ENCODE measurements at regions of chr11 and their contacts with region 1.

Region 1: GRCh38 chr11:128039140-128040021 is 548.0 kb downstream of the ETS1 start:
- DNase-seq: peak; percentile 90
- H3K4me3 Mint-ChIP-seq: peak overlapping the region; percentile 61
- H3K27ac Mint-ChIP-seq: peak overlapping the region; percentile 89
- H3K4me1 Mint-ChIP-seq: peaks cover 52% of the 10 kb centered on the region
- H3K27me3 Mint-ChIP-seq: no peaks in the 10 kb centered on the region

Region 2: DNA sequence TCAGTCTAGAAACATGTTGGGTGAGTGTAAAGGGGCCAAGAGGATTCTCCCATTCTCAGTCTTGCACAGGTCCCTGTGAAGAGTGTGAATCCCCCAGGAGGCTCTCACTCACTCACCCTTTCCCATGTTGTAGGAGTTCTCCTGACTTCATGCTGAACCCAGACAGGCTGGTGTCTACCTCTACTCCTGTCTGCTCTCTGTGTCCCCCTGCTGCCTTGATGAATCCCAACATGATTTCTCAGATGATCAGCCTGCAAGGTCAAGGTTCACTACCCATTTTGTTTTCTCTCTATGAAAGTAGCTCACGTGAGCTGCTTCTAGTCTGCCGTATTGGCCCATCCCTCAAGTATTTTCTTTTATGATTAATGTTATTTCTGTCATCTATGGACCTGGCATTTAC is 47.4 kb after region 1 on chr11:
- CTCF ChIA-PET with region 1: interaction called, 5 read pairs
- POLR2A ChIA-PET with region 1: no interaction called
- intact Hi-C with region 1: loop called (anchors 2 kb)
- DNase-seq: no peak
- H3K4me3 Mint-ChIP-seq: no peak overlapping the region
- H3K27ac Mint-ChIP-seq: no peak overlapping the region
- H3K4me1 Mint-ChIP-seq: peaks cover 49% of the 10 kb centered on the region
- H3K27me3 Mint-ChIP-seq: no peaks in the 10 kb centered on the region

Region 3: GRCh38 chr11:128179039-128179438 is 139.7 kb after region 1 on chr11:
- CTCF ChIA-PET with region 1: no interaction called
- POLR2A ChIA-PET with region 1: no interaction called
- intact Hi-C with region 1: no loop called
- DNase-seq: no peak
- H3K4me3 Mint-ChIP-seq: no peak overlapping the region
- H3K27ac Mint-ChIP-seq: no peak overlapping the region
- H3K4me1 Mint-ChIP-seq: peaks cover 16% of the 10 kb centered on the region
- H3K27me3 Mint-ChIP-seq: no peaks in the 10 kb centered on the region

Region 4: DNA sequence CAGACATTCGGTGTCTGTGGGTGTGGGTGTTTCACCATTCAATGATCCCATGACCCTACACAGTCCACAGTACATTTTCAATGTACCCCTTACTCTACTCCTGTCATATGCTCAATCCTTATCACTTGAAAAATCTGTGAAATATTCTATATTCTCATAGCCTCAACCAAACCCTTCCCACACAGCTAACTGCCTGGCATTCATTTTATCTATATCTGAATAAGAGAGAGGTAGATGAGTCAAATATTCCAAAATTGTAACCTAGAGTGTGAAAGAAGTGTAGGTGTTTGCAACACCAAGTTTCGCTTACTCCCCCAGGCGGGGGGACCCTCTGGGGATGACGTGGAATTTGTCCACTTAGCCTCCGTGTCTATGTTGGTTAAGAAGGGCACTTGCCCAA is 193.2 kb after region 1 on chr11:
- CTCF ChIA-PET with region 1: no interaction called
- POLR2A ChIA-PET with region 1: interaction called, 3 read pairs
- intact Hi-C with region 1: loop called (anchors 1 kb)
- DNase-seq: peak; percentile 85
- H3K4me3 Mint-ChIP-seq: no peak overlapping the region
- H3K27ac Mint-ChIP-seq: peak overlapping the region; percentile 69
- H3K4me1 Mint-ChIP-seq: peaks cover 52% of the 10 kb centered on the region
- H3K27me3 Mint-ChIP-seq: no peaks in the 10 kb centered on the region

Region 5: GRCh38 chr11:128422576-128423370 is 383.4 kb after region 1 on chr11:
- CTCF ChIA-PET with region 1: no interaction called
- POLR2A ChIA-PET with region 1: no interaction called
- intact Hi-C with region 1: no loop called
- DNase-seq: peak; percentile 95
- H3K4me3 Mint-ChIP-seq: peak overlapping the region; percentile 49
- H3K27ac Mint-ChIP-seq: peak overlapping the region; percentile 65
- H3K4me1 Mint-ChIP-seq: peaks cover 34% of the 10 kb centered on the region
- H3K27me3 Mint-ChIP-seq: no peaks in the 10 kb centered on the region

Region 6: DNA sequence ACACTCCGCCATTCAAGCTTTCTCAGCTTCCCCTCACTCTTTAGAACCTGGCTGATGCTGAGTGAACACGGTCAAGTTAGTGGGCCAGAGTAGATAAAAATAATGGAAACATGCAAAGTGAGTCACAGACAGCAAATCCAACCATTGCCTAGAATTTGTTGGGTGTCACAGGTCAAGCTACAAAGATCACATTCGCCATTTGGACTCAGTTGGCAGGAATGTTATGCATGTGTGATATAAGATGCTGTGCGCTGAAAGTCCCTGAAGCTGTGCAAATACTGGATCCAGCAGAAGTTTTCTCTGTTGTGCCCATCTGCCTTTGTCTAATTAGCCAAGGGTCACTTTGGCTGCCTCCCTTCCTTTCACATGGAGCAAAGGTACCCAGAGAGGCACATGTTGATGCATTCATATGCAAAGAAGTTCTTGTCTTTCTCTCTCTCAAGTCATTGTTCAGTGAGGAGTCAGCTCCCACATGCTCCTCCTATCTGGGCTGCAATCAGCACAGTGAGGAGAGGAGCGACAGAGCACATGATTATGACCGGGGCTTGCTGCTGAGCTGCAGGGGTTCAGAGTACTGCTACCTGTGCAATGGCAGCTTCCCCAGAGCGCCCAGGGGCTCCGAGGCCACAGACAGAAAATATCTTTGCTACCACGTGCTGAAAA is 694.2 kb after region 1 on chr11:
- CTCF ChIA-PET with region 1: no interaction called
- POLR2A ChIA-PET with region 1: no interaction called
- intact Hi-C with region 1: loop called (anchors 5 kb)
- DNase-seq: peak; percentile 65
- H3K4me3 Mint-ChIP-seq: peak overlapping the region; percentile 63
- H3K27ac Mint-ChIP-seq: peak overlapping the region; percentile 79
- H3K4me1 Mint-ChIP-seq: peaks cover 98% of the 10 kb centered on the region
- H3K27me3 Mint-ChIP-seq: no peaks in the 10 kb centered on the region

Region 7: DNA sequence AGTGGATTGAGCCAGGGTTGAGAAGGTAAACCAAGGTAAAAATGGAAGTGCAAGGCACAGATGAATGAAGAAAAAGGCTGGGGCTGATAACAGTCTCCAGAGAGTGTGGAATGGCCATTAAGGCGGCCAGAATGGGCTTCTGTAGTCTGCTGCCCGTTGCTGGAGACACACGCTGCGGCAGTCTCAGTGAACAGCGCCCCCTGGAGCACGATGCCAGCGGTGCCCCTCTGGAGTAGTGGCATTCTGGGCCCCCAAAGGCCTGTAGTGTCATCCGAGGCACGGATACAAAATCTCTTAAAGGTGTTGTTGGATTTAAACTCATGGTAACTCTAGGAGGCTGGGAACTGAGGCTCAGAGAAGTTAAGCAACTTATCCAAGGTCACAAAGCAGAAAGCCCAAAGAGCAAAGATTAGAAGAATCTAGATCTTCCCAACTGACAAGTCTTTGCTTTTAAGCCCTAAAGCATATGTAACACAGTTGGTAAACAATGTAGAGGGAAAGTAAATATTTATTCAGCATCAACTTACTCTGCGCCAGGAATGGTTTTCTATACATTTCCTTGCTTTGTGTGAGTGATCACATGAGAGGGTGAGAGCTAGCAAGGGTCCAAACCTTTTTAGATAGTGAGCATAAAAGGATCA is 809.6 kb after region 1 on chr11:
- CTCF ChIA-PET with region 1: interaction called, 3 read pairs
- POLR2A ChIA-PET with region 1: no interaction called
- intact Hi-C with region 1: loop called (anchors 5 kb)
- DNase-seq: peak; percentile 82
- H3K4me3 Mint-ChIP-seq: no peak overlapping the region
- H3K27ac Mint-ChIP-seq: no peak overlapping the region
- H3K4me1 Mint-ChIP-seq: peaks cover 23% of the 10 kb centered on the region
- H3K27me3 Mint-ChIP-seq: no peaks in the 10 kb centered on the region

Measured in activated CD4-positive, alpha-beta memory T cell treated with anti-CD3 and anti-CD28 coated beads for 36 hours (primary cell).